CD8-positive, alpha-beta T cell (primary cell): ENCODE measurements at regions of chr3 and their contacts with region 1.

Region 1: GRCh38 chr3:129316131-129317013 is 37.7 kb downstream of the HMCES start:
- DNase-seq: peak; percentile 79 to 96 (median 89)
- ATAC-seq: peak; percentile 45
- H3K4me3 ChIP-seq: peak overlapping the region; percentile 94 to 98
- H3K4me3 Mint-ChIP-seq: peak overlapping the region; percentile 95
- H3K27ac ChIP-seq: peak overlapping the region; percentile 55 to 84
- H3K27ac Mint-ChIP-seq: peak overlapping the region; percentile 88
- H3K4me1 ChIP-seq: peaks cover 16% of the 10 kb centered on the region
- H3K4me1 Mint-ChIP-seq: peaks cover 25% of the 10 kb centered on the region
- H3K27me3 ChIP-seq: no peaks in the 10 kb centered on the region
- H3K27me3 Mint-ChIP-seq: no peaks in the 10 kb centered on the region
- CTCF ChIP-seq: peak; percentile 68

Region 2: DNA sequence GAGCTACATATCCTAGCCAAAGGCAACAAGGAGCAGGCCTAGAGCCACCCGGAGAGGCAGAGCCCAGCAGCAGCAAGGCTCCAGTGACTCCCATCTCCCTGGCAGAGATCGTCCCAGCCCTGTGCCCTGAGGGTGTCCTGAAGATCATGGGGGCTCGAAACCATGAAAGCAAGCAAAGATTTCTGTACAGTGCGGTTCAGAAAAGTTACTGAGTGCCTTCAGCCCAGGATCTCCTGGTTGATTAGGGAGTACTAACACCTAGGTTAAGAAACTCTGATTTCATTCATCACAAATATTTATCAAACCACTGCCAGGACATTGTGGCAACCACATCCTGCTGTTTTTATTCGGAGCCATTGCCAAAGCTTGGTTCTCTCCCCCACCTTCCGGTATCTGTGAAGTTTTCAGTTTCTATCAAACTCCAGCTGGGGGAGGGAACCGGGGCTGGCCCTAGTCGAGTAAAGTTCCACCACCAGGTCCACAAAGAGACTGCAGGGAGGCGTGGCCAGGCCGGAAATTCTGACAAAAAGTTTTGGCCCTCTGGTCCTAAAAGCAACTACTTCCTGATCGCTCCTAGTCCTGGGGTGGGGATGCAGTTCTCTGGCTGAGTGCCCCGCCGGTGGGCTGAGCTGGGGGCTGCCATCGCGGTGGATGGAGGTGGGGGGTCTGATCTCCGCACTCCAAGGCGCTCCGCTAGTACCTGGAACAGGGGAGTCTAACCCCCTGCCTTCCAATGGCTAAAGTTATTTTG is 195.9 kb before region 1 on chr3:
- CTCF ChIA-PET with region 1: interaction called, 3 read pairs
- POLR2A ChIA-PET with region 1: interaction called, 11 read pairs
- intact Hi-C with region 1: loop called in 1 of 2 experiments (anchors 5 kb)
- DNase-seq: peak; percentile 79 to 97 (median 92)
- ATAC-seq: peak; percentile 51
- H3K4me3 ChIP-seq: peak overlapping the region; percentile 85 to 93
- H3K4me3 Mint-ChIP-seq: peak overlapping the region; percentile 94
- H3K27ac ChIP-seq: peak overlapping the region; percentile 74
- H3K27ac Mint-ChIP-seq: peak overlapping the region; percentile 99
- H3K4me1 ChIP-seq: peaks cover 33% of the 10 kb centered on the region
- H3K4me1 Mint-ChIP-seq: peaks cover 59% of the 10 kb centered on the region
- H3K27me3 ChIP-seq: no peaks in the 10 kb centered on the region
- H3K27me3 Mint-ChIP-seq: no peaks in the 10 kb centered on the region
- CTCF ChIP-seq: peak; percentile 26

Region 3: DNA sequence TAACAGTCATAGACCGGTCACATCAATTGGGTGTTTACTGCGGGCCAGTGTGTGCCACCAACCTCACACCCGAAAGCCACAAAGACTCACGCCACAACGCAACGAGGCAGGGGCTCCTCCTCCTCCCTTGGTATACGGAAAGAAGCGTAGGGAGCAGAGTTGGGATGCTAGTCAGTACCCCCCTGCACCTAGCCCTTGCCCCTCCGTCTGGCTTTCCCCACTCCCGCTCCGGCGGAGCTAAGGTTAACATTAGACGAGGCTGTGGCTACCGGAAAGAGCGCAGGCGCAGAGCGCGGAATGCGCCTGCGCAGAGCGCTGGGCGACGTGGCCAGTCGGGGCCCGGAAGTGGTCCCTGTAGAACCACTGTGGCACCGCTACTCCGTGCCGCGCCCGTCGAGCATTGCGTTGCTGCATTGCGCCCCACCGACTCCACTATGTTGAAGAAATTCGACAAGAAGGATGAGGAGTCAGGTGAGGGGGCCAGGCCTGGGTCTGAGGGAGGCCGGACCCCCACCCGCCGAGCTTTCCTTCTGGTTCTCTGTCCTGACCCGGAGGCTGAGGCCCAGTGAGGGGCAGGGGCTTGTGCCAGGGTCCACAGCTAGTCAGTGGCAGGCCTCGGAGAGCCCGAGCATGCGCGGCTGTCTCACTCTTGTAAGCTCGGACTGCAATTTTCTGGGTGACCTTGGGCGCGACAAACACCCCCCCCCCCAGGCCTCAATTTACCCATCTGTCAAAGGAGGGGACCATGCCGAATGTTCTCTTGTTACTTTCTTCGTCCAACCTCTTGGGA is 66.9 kb before region 1 on chr3 and contains the start of gene COPG1:
- CTCF ChIA-PET with region 1: interaction called, 11 read pairs
- POLR2A ChIA-PET with region 1: interaction called, 11 read pairs
- intact Hi-C with region 1: no loop called
- DNase-seq: peak; percentile 72 to 95 (median 85)
- ATAC-seq: peak; percentile 83
- H3K4me3 ChIP-seq: peak within 1 kb of the TSS; percentile 80 to 87
- H3K4me3 Mint-ChIP-seq: peak within 1 kb of the TSS; percentile 96
- H3K27ac ChIP-seq: peak within 1 kb of the TSS; percentile 83 to 89
- H3K27ac Mint-ChIP-seq: peak within 1 kb of the TSS; percentile 96
- H3K4me1 ChIP-seq: peaks cover 31% of the 10 kb centered on the region
- H3K4me1 Mint-ChIP-seq: peaks cover 49% of the 10 kb centered on the region
- H3K27me3 ChIP-seq: no peaks in the 10 kb centered on the region
- H3K27me3 Mint-ChIP-seq: no peaks in the 10 kb centered on the region
- CTCF ChIP-seq: no peak
- total RNA-seq, gene COPG1: 77.0 to 93.5 TPM

Region 4: GRCh38 chr3:129305592-129306091 is 10.7 kb before region 1 on chr3:
- CTCF ChIA-PET with region 1: interaction called, 4 read pairs
- POLR2A ChIA-PET with region 1: interaction called, 16 read pairs
- intact Hi-C with region 1: no loop called
- DNase-seq: no peak
- ATAC-seq: no peak
- H3K4me3 ChIP-seq: no peak overlapping the region
- H3K4me3 Mint-ChIP-seq: no peak overlapping the region
- H3K27ac ChIP-seq: no peak overlapping the region
- H3K27ac Mint-ChIP-seq: no peak overlapping the region
- H3K4me1 ChIP-seq: no peaks in the 10 kb centered on the region
- H3K4me1 Mint-ChIP-seq: peaks cover 14% of the 10 kb centered on the region
- H3K27me3 ChIP-seq: no peaks in the 10 kb centered on the region
- H3K27me3 Mint-ChIP-seq: no peaks in the 10 kb centered on the region
- CTCF ChIP-seq: no peak

Region 5: DNA sequence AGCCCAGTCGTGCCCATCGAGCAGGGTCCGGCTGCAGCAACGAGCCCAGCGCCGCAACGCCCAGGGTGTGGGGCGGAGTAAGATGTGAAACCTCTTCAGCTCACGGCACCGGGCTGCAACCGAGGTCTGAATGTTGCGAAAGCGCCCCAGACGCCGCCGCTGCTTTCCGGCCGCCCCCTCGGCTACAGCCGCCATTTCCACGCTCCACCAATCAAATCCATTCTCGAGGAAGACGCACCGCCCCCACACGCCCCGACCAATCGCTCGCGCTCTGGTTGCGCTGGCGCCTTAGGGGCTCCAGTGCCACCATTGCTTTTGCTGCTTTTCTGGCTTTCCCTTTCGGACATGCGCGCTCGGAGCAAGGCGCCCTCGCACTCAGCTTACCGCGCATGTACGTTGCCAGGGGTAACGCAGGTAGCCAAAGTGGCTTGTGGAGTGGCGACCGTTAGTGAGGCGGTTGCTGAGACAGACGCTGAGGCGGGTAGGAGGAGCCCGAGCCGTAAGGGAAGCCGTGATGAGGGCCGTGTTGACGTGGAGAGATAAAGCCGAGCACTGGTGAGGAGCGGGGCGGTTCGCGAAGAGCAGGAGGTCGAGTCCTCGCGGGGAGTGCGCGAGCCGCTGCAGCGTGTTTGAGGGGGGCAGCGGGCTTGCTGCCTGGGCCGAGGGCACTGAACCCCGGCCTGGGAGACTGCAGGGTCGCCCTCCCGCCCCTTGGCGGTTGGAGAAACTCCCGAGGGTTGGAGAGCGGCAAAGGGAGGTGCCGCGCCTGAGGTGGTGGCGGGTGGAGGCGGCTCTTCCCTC is 123.6 kb after region 1 on chr3 and contains the starts of genes IFT122 and MBD4:
- CTCF ChIA-PET with region 1: no interaction called
- POLR2A ChIA-PET with region 1: interaction called, 7 read pairs
- intact Hi-C with region 1: loop called in 1 of 2 experiments (anchors 2 kb)
- DNase-seq: peak; percentile 97 to 100 (median 98)
- ATAC-seq: peak; percentile 82
- H3K4me3 ChIP-seq: peak within 1 kb of the TSS; percentile 87 to 99
- H3K4me3 Mint-ChIP-seq: peak within 1 kb of the TSS; percentile 96
- H3K27ac ChIP-seq: peak within 1 kb of the TSS; percentile 92 to 93
- H3K27ac Mint-ChIP-seq: peak within 1 kb of the TSS; percentile 98
- H3K4me1 ChIP-seq: peaks cover 34% of the 10 kb centered on the region
- H3K4me1 Mint-ChIP-seq: peaks cover 70% of the 10 kb centered on the region
- H3K27me3 ChIP-seq: no peaks in the 10 kb centered on the region
- H3K27me3 Mint-ChIP-seq: no peaks in the 10 kb centered on the region
- CTCF ChIP-seq: no peak
- total RNA-seq, gene IFT122: 14.7 to 16.9 TPM
- total RNA-seq, gene MBD4: 48.5 to 51.8 TPM

Region 6: GRCh38 chr3:129855454-129856419 is 539.4 kb after region 1 on chr3:
- CTCF ChIA-PET with region 1: no interaction called
- POLR2A ChIA-PET with region 1: no interaction called
- intact Hi-C with region 1: no loop called
- DNase-seq: peak in 1 of 9 experiments; percentile 8
- ATAC-seq: no peak
- H3K4me3 ChIP-seq: no peak overlapping the region
- H3K4me3 Mint-ChIP-seq: no peak overlapping the region
- H3K27ac ChIP-seq: no peak overlapping the region
- H3K27ac Mint-ChIP-seq: peak overlapping the region; percentile 33
- H3K4me1 ChIP-seq: no peaks in the 10 kb centered on the region
- H3K4me1 Mint-ChIP-seq: peaks cover 21% of the 10 kb centered on the region
- H3K27me3 ChIP-seq: no peaks in the 10 kb centered on the region
- H3K27me3 Mint-ChIP-seq: no peaks in the 10 kb centered on the region
- CTCF ChIP-seq: no peak